Right ventricle myocardium inferior (tissue), 1 donor: ENCODE measurements at regions of chr6 and their contacts with region 1.

Region 1: DNA sequence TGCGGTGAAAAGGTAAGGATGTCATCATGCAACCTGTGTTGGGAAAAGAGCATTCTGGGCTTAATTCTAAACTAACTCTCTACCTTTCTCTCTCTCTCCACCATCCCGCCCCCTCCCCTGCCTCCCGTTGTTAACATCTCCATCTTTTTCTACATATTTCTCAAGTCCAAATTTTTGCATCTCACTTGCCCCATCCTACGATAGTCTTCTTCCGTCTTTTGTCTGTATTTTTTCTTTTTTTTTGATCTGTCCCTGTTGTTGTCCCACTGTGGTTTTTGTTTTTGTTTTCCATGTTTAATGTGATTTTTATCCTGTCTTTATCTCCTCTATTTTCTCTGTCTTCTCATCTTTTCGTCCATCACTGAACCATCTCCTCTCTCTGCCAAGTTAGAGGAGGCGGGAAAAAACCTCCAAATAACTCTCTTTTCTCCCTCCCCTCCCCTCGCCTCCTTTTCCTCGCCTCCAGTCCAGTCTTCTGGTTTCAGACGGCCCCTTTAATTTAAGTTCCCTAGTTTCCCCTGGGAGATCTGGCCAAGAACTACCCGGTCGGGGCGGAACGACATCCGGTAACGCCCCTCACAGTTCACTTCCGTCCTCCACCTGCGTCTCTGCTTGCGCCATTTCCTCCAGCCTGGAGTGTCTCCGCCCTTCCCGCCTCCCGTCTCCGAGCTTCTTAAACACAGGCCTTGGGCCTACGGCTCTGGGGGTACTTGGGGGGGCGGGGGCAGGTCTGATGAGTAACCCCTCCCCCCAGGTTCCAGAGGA is at the start of gene NFKBIL1:
- DNase-seq: peak; percentile 95
- ATAC-seq: peak; percentile 97
- total RNA-seq, gene NFKBIL1: 10.8 TPM

Region 2: DNA sequence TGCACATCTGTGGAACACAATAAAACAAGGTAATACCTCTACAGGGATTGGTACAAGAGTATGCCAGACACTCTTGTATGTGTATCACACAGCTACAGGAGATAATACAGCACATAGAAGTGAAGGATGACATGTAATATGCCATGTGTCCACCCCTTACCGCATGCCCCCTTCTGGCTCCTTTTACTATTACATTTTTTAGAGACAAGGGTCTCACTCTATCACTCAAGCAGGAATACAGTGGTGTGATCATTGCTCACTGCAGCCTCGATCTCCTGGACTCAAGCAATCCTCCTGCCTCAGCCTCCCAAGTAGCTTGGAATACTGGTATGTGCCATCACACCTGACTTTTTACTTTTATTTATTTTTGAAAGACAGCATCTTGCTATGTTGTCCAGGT is 49.9 kb after region 1 on chr6:
- intact Hi-C with region 1: loop called (anchors 1 kb)
- DNase-seq: no peak
- ATAC-seq: peak; percentile 47